Posterior cingulate gyrus (tissue), 11 donors: ENCODE measurements at regions of chr6 and their contacts with region 1.

Region 1: DNA sequence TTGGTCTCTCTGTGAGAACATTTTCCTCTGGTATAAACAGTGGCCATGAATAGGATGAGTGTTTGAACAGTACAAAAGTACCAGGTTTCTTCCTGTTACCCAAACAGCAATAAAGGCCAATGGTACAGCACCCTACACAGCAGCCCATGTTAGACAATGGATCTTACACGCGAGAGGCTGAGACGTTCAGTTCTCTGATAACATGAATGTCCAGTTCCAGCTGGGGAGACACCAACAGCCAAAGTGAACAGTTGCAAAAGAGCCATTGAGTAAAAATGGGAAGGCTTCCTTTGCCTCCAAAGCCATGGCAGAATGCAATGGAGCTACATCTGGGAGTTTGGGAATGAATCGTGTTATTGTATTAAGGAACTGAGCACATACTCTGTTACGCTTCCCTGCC is 246.8 kb upstream of the SGK1 start:
- DNase-seq: peak in 9 of 10 donors; percentile 19 to 95 (median 67)

Region 2: DNA sequence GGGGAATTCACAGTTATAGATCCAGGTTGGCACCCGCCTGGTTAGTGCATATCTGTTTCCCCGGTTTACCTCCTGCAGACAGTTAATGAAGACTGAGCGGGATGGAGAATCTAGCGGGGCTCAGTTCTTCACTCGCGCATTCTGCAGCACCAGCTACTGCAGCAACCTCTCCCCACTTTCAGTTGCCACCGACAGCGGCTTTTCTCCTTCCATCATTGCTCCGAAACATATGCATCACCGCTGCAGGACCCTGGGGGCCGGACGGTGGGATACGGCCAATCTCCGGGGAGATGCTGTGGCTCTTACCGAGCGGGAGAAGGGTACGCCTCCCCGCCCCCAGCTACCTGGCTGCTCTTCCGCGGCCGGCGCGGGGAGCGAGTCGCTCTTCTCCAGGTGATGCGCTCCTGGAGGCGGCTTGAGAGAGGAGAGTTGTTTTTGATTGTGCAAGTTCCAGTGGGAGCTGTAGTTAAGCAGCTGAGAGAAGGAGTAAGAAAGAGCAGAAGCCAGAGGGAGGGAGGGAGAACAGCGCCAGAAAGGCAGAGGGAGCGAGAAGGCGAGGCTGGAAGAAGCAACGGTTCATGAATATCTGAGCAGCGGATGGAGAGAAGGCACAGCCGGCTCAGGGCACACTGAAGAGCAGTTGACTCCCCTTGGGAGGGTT is 247.1 kb before region 1 on chr6 and contains the start of gene SGK1:
- intact Hi-C with region 1: loop called (anchors 5 kb)
- DNase-seq: peak; percentile 38 to 91 (median 54)

Region 3: GRCh38 chr6:134619789-134620188 is 55.1 kb after region 1 on chr6:
- intact Hi-C with region 1: loop called (anchors 10 kb)
- DNase-seq: no peak

Region 4: DNA sequence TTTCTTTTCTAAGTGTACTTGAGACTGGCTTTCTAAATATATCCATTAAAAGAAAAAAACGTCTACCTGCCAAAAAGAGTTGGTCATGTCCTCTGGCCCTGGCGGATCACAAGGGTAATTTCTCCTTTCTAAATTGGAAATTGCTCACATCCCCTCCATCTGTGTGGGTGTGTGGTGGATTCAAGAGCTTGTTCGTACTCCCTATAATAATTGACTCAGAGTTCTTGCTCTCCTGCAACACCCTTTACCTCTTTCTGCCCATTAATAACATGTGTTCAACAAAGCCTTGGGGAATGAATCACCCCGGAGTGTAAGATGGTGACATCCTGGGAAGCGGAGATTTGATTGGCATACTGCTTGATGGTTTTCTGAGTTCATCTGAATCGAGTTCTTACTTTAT is 121.4 kb after region 1 on chr6:
- intact Hi-C with region 1: loop called (anchors 5 kb)
- DNase-seq: no peak